GM12878 (cell line): ENCODE measurements at regions of chr12 and their contacts with region 1.

Region 1: GRCh38 chr12:92170050-92170449 is 24.4 kb upstream of the BTG1 start:
- DNase-seq: no peak
- ATAC-seq: no peak
- H3K4me3 ChIP-seq: no peak overlapping the region
- H3K27ac ChIP-seq: no peak overlapping the region
- H3K4me1 ChIP-seq: peaks cover 16% of the 10 kb centered on the region
- H3K27me3 ChIP-seq: no peaks in the 10 kb centered on the region
- CTCF ChIP-seq: no peak
- EP300 ChIP-seq: no peak
- POLR2A ChIP-seq: no peak
- RAD21 ChIP-seq: no peak

Region 2: DNA sequence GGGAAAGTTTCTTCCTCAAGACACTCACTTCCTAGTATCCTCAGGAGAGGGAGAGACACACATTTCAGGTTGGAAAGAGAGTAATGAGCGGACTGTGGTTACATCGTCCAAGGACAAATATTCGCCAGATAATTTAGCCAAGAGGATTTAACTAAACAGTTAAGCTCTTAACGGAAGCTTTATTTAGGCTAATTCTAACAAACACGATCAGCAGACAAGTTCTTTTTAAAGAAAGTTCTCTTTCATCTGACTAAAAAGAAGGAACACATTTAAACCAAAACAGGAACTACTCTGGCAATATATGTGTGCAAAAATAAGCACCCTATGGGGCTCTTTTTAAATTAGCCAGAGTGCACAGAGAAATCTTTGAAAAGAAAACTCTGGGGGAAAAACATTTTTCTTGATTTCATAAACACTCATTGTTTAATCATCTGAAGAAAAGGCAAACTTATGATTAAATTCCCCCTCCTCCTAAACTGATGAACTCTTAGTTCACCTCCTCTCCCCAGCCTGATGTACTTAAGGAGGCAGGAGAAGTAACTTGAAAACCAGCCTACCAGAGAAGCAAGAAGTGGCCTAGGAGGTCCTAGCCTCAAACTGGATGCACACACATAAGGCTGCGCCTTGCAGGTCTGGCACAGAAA is 11.1 kb before region 1 on chr12:
- CTCF ChIA-PET with region 1: interaction called, 10 read pairs
- POLR2A ChIA-PET with region 1: interaction called, 31 read pairs
- RAD21 ChIA-PET with region 1: interaction called, 52 read pairs
- SMC1A ChIA-PET with region 1: interaction called, 120 read pairs
- in situ Hi-C with region 1: no loop called
- intact Hi-C with region 1: no loop called
- DNase-seq: no peak
- ATAC-seq: peak; percentile 73
- H3K4me3 ChIP-seq: peak overlapping the region; percentile 59
- H3K27ac ChIP-seq: peak overlapping the region; percentile 87
- H3K4me1 ChIP-seq: peaks cover 21% of the 10 kb centered on the region
- H3K27me3 ChIP-seq: no peaks in the 10 kb centered on the region
- CTCF ChIP-seq: no peak
- EP300 ChIP-seq: peak in 1 of 2 experiments; percentile 40; a peak in 1 of 4 replicates
- POLR2A ChIP-seq: no peak
- RAD21 ChIP-seq: no peak

Region 3: GRCh38 chr12:92185052-92185451 is 15.0 kb after region 1 on chr12:
- CTCF ChIA-PET with region 1: interaction called, 5 read pairs
- POLR2A ChIA-PET with region 1: interaction called, 23 read pairs
- RAD21 ChIA-PET with region 1: interaction called, 10 read pairs
- SMC1A ChIA-PET with region 1: interaction called, 12 read pairs
- in situ Hi-C with region 1: no loop called
- intact Hi-C with region 1: no loop called
- DNase-seq: peak; percentile 80
- ATAC-seq: peak; percentile 81
- H3K4me3 ChIP-seq: no peak overlapping the region
- H3K27ac ChIP-seq: peak overlapping the region; percentile 77
- H3K4me1 ChIP-seq: peaks cover 28% of the 10 kb centered on the region
- H3K27me3 ChIP-seq: no peaks in the 10 kb centered on the region
- CTCF ChIP-seq: no peak
- EP300 ChIP-seq: peak; percentile 14 to 61; a peak in 1 of 4 replicates
- POLR2A ChIP-seq: no peak
- RAD21 ChIP-seq: peak; percentile 13; the same call in 1 of the 2 replicates